ENCODE measurements at regions of chr7 and their contacts with region 1.

Region 1: DNA sequence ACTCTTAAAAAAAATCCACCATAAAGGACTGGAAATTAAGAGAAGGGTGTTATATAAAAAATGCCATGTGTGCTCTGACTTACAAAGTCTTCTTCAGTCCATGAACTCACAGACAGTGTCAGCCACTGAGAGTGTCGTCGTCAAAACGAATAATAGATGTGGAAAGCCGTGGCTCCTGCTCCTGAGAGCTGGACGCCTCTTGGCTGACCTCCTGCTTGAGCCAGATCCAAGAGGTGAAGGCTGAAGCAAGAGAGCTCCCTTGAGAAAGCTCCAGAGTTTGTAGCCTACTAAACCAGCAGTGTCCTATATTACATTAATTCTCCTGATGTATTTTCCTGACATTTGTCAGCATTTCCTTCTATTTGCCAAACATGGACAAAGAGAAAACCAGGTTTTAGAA is 234.3 kb upstream of the C7orf33 start:
- DNase-seq: no peak
- ATAC-seq: no peak
- H3K4me3 ChIP-seq: no peak overlapping the region
- H3K27ac ChIP-seq: no peak overlapping the region
- H3K4me1 ChIP-seq: no peaks in the 10 kb centered on the region
- H3K27me3 ChIP-seq: peaks cover 0 to 10% of the 10 kb centered on the region in 2 experiments; a peak in 3 of 5 replicates
- CTCF ChIP-seq: no peak
- EP300 ChIP-seq: no peak
- POLR2A ChIP-seq: no peak
- RAD21 ChIP-seq: no peak

Region 2: DNA sequence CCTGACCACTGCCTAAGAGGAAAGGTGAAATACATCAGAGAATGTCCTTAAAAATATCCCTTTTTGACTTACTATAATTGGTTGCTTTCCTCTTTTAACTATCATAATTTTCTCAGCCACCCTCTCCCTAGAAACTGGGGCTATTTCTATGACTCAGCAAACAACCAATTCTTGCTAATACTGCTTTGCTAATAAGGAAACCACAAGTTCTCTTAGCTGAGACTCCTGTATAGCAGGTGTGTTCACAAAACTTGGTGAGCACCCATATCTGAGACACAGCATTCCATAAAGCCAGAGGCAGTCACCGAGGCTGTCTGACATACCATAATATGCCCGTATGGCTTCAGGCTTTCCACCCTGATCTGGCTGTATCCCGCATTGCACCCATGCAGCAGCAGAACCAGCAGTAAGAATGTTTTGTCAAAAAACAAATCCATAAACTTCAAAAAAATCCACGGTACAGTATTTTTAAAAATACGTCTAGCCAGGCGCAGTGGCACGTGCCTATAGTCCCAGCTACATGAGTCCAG is 42.6 kb after region 1 on chr7:
- CTCF ChIA-PET with region 1: no interaction called
- POLR2A ChIA-PET with region 1: no interaction called
- in situ Hi-C with region 1: loop called (anchors 5 kb)
- intact Hi-C with region 1: no loop called
- DNase-seq: no peak
- ATAC-seq: no peak
- H3K4me3 ChIP-seq: no peak overlapping the region
- H3K27ac ChIP-seq: no peak overlapping the region
- H3K4me1 ChIP-seq: no peaks in the 10 kb centered on the region
- H3K27me3 ChIP-seq: peaks cover 36 to 43% of the 10 kb centered on the region in 2 experiments
- CTCF ChIP-seq: no peak
- EP300 ChIP-seq: no peak
- POLR2A ChIP-seq: no peak
- RAD21 ChIP-seq: no peak

Region 3: GRCh38 chr7:148436571-148436970 is 80.3 kb after region 1 on chr7:
- CTCF ChIA-PET with region 1: no interaction called
- POLR2A ChIA-PET with region 1: no interaction called
- in situ Hi-C with region 1: no loop called
- intact Hi-C with region 1: no loop called
- DNase-seq: no peak
- ATAC-seq: peak; percentile 78
- H3K4me3 ChIP-seq: no peak overlapping the region
- H3K27ac ChIP-seq: no peak overlapping the region
- H3K4me1 ChIP-seq: no peaks in the 10 kb centered on the region
- H3K27me3 ChIP-seq: peaks cover 8 to 26% of the 10 kb centered on the region in 2 experiments; a peak in 4 of 5 replicates
- CTCF ChIP-seq: no peak
- EP300 ChIP-seq: no peak
- POLR2A ChIP-seq: no peak
- RAD21 ChIP-seq: no peak